Stomach (tissue), 19 donors: ENCODE measurements at regions of chr1 and their contacts with region 1.

Region 1: GRCh38 chr1:228139944-228140656 is at the start of gene GUK1:
- DNase-seq: peak; percentile 100
- H3K4me3 ChIP-seq: peak within 1 kb of the TSS; percentile 65 to 97 (median 88)
- H3K27ac ChIP-seq: peak within 1 kb of the TSS; percentile 97 to 99 (median 99)
- H3K4me1 ChIP-seq: peaks cover 38 to 50% (median 49%) of the 10 kb centered on the region in 4 donors
- H3K27me3 ChIP-seq: no peaks in the 10 kb centered on the region
- CTCF ChIP-seq: peak in 5 of 7 experiments; percentile 11 to 55 (median 19)
- EP300 ChIP-seq: no peak
- POLR2A ChIP-seq: peak in 2 of 4 donors; percentile 82 to 98
- total RNA-seq, gene GUK1: 179 to 326 (median 230) TPM

Region 2: DNA sequence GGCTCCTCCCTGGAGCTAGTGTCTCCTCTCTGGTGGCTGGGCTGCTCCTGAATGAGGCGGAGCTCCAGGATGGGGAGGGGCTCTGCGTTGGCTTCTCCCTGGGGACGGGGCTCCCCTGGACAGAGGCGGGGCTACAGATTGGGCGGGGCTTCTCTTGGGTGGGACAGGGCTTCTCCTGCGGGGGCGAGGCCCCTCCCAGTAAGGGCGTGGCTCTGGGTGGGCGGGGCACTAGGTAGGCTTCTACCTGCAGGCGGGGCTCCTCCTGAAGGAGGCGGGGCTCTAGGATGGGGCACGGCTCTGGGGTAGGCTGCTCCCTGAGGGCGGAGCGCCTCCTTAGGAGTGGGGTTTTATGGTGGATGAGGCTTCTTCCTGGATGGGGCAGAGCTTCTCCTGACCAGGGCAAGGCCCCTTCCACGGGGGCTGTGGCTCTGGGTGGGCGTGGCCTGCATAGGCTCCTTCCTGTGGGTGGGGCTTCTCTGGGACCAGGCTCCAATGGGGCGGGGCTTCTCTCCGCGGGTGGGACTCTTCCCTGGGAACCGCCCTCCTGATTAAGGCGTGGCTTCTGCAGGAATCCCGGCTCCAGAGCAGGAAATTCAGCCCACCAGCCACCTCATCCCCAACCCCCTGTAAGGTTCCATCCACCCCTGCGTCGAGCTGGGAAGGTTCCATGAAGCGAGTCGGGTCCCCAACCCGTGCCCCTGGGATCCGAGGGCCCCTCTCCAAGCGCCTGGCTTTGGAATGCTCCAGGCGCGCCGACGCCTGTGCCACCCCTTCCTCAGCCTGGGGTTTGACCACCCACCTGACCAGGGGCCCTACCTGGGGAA is 80.3 kb before region 1 on chr1:
- intact Hi-C with region 1: no loop called
- DNase-seq: peak; percentile 92 to 100
- H3K4me3 ChIP-seq: peak overlapping the region; percentile 36 to 59 (median 44)
- H3K27ac ChIP-seq: peak overlapping the region; percentile 56 to 76 (median 72)
- H3K4me1 ChIP-seq: peaks cover 20 to 27% (median 25%) of the 10 kb centered on the region in 4 donors
- H3K27me3 ChIP-seq: peaks cover 11 to 77% (median 62%) of the 10 kb centered on the region in 3 donors
- CTCF ChIP-seq: no peak
- EP300 ChIP-seq: no peak
- POLR2A ChIP-seq: no peak

Region 3: DNA sequence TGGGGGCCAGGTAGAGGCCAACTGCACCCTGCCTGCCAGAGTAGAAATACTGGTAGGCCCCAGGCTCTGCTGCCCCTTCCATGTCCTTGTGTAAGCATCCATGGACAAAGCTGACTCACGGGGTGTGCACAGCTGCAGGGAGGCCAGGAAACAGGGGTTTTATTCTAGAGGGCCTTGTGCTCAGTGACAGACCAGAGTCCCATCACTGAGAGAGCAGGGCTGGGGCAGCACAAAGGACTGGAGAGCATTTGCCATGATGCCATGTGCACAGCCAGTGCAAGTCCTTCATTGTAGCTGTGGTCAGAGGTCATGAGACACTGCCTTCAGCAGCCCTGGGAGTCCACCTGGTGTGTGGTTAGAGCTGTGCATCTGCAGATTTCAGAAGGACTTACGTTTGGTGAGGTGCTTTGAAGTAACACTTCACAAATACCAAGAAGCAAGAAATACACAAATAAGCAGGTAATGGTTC is 49.5 kb before region 1 on chr1:
- intact Hi-C with region 1: loop called (anchors 10 kb)
- DNase-seq: peak in 1 of 2 donors; percentile 25
- H3K4me3 ChIP-seq: peak overlapping the region in 1 of 4 donors; percentile 34
- H3K27ac ChIP-seq: peak overlapping the region in 2 of 5 donors; percentile 70 to 98
- H3K4me1 ChIP-seq: peaks cover 72 to 87% (median 84%) of the 10 kb centered on the region in 4 donors
- H3K27me3 ChIP-seq: no peaks in the 10 kb centered on the region
- CTCF ChIP-seq: no peak
- EP300 ChIP-seq: no peak
- POLR2A ChIP-seq: no peak

Region 4: GRCh38 chr1:228236744-228237143 is 96.6 kb after region 1 on chr1:
- intact Hi-C with region 1: no loop called
- DNase-seq: peak in 1 of 2 donors; percentile 49
- H3K4me3 ChIP-seq: no peak overlapping the region
- H3K27ac ChIP-seq: no peak overlapping the region
- H3K4me1 ChIP-seq: no peaks in the 10 kb centered on the region
- H3K27me3 ChIP-seq: no peaks in the 10 kb centered on the region
- CTCF ChIP-seq: peak in 2 of 7 experiments; percentile 28 to 36
- EP300 ChIP-seq: no peak
- POLR2A ChIP-seq: no peak

Region 5: DNA sequence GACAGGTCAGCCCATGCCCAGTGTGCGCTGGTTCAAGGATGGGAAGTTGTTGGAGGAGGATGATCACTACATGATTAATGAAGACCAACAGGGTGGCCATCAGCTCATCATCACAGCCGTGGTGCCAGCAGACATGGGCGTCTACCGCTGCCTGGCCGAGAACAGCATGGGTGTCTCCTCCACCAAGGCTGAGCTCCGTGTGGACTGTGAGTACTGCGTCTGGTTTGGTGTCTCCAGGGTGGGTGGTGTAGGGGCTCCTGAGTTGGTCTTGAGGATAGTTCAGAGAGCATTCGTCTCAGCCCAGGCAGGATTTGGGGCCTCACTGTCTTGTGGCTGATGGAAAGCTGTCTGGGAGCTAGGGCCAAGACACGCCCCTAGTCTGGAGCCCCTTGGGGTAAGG is 183.3 kb after region 1 on chr1:
- intact Hi-C with region 1: no loop called
- DNase-seq: peak in 1 of 2 donors; percentile 19
- H3K4me3 ChIP-seq: no peak overlapping the region
- H3K27ac ChIP-seq: no peak overlapping the region
- H3K4me1 ChIP-seq: no peaks in the 10 kb centered on the region
- H3K27me3 ChIP-seq: no peaks in the 10 kb centered on the region
- CTCF ChIP-seq: no peak
- EP300 ChIP-seq: no peak
- POLR2A ChIP-seq: no peak

Region 6: GRCh38 chr1:228420963-228421826 is 281.1 kb after region 1 on chr1:
- intact Hi-C with region 1: no loop called
- DNase-seq: no peak
- H3K4me3 ChIP-seq: no peak overlapping the region
- H3K27ac ChIP-seq: no peak overlapping the region
- H3K4me1 ChIP-seq: peaks cover 10 to 16% (median 12%) of the 10 kb centered on the region in 4 donors
- H3K27me3 ChIP-seq: peaks cover 0 to 52% (median 20%) of the 10 kb centered on the region in 3 donors
- CTCF ChIP-seq: no peak
- EP300 ChIP-seq: no peak
- POLR2A ChIP-seq: no peak